Panc1 (cell line): ENCODE measurements at regions of chr1 and their contacts with region 1.

Region 1: DNA sequence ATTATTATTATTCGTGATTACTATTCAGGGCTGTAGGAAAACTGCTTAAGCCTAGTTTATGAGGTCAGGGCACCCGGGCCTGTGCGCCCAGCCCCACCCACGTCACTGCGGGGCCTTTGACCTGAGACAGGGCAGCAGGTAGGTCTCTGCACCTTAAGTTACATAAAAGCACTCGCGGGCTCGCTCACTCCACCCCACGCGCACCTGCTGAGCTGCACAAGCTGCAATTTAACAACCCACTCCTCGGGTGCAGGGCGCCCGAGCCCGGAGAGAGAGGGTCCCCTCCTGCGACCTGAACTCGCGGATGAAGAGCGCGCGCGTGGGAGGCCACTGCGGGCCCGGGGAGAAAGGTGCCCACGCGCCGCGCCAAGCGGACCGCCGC is 477 bp downstream of the ICMT start:
- DNase-seq: no peak
- ATAC-seq: peak; percentile 4; the same call in 1 of the 2 replicates
- H3K4me3 ChIP-seq: peak overlapping the region; percentile 62 to 84
- H3K27ac ChIP-seq: peak overlapping the region; percentile 84
- H3K4me1 ChIP-seq: peaks cover 6% of the 10 kb centered on the region
- H3K27me3 ChIP-seq: no peaks in the 10 kb centered on the region
- CTCF ChIP-seq: no peak

Region 2: GRCh38 chr1:6385488-6386191 is 150.4 kb after region 1 on chr1:
- CTCF ChIA-PET with region 1: interaction called, 11 read pairs
- POLR2A ChIA-PET with region 1: no interaction called
- in situ Hi-C with region 1: no loop called
- intact Hi-C with region 1: no loop called
- DNase-seq: peak; percentile 56
- ATAC-seq: peak; percentile 84
- H3K4me3 ChIP-seq: peak overlapping the region; percentile 25 to 54
- H3K27ac ChIP-seq: peak overlapping the region; percentile 90
- H3K4me1 ChIP-seq: peaks cover 28% of the 10 kb centered on the region
- H3K27me3 ChIP-seq: no peaks in the 10 kb centered on the region
- CTCF ChIP-seq: no peak